H1 (cell line): ENCODE measurements at regions of chr1 and their contacts with region 1.

Region 1: GRCh38 chr1:23657659-23658275 is 33.8 kb upstream of the RPL11 start:
- DNase-seq: peak; percentile 50 to 91
- H3K4me3 ChIP-seq: no peak overlapping the region
- H3K27ac ChIP-seq: no peak overlapping the region
- H3K4me1 ChIP-seq: no peaks in the 10 kb centered on the region
- H3K27me3 ChIP-seq: no peaks in the 10 kb centered on the region
- CTCF ChIP-seq: peak; percentile 81 to 98 (median 90)
- EP300 ChIP-seq: no peak
- POLR2A ChIP-seq: no peak
- RAD21 ChIP-seq: peak; percentile 66 to 76

Region 2: DNA sequence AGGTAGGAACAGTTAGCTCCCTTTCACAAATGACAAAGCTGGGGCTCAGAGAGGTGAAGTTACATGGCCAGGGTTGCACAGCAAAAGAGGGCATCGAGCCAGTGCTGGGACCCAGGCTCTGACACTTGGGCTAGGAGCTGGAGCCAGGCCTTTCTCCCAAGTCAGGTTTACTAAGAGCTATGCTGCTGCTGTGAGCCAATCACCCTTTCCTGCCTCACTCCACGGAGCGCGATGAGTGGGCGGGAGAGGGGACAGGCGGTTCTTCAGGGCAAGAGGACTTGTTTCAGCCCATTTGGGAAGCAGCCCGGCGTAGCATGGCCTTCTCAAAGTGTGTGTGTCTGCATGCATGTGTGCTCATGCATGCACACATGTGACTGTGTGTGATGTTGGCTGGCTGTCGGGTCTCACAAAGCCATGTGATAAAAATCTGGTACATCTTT is 109.0 kb before region 1 on chr1:
- CTCF ChIA-PET with region 1: interaction called, 30 read pairs
- POLR2A ChIA-PET with region 1: no interaction called
- DNase-seq: no peak
- H3K4me3 ChIP-seq: no peak overlapping the region
- H3K27ac ChIP-seq: no peak overlapping the region
- H3K4me1 ChIP-seq: peaks cover 7 to 15% (median 8%) of the 10 kb centered on the region in 4 experiments; a peak in 6 of 7 replicates
- H3K27me3 ChIP-seq: peaks cover 0 to 2% (median 1%) of the 10 kb centered on the region in 4 experiments; a peak in 2 of 7 replicates
- CTCF ChIP-seq: no peak
- EP300 ChIP-seq: no peak
- POLR2A ChIP-seq: no peak
- RAD21 ChIP-seq: no peak

Region 3: GRCh38 chr1:23643736-23644554 is 13.8 kb before region 1 on chr1:
- CTCF ChIA-PET with region 1: interaction called, 222 read pairs
- POLR2A ChIA-PET with region 1: interaction called, 3 read pairs
- DNase-seq: no peak
- H3K4me3 ChIP-seq: no peak overlapping the region
- H3K27ac ChIP-seq: no peak overlapping the region
- H3K4me1 ChIP-seq: peaks cover 0 to 4% (median 2%) of the 10 kb centered on the region in 4 experiments; a peak in 3 of 7 replicates
- H3K27me3 ChIP-seq: peaks cover 0 to 2% (median 0%) of the 10 kb centered on the region in 4 experiments; a peak in 2 of 7 replicates
- CTCF ChIP-seq: no peak
- EP300 ChIP-seq: no peak
- POLR2A ChIP-seq: no peak
- RAD21 ChIP-seq: no peak

Region 4: DNA sequence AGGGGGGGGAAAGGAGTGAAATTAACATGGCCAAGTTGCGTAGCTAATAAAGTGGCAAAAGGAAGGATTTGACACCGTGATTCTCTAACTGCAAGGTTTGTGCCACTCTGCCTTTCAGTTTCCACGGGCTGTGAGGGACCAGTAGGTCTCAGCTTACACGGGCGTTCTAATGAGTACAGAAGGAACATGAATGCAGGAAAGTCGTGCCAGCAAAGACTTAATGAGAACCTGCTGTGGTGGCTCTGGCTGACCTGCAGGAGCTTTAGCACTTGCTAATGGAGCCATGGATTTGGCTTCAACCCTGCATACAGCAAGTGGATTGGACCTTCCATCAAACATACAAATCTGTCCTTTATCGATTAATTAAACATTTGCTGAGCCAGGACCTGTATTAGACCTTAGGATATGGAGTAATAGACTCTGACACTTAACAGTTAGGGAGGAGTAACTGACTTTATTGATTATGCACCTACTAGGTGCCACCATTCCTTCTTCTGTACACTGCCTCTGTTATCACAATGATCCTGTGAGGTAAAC is 105.3 kb after region 1 on chr1:
- CTCF ChIA-PET with region 1: no interaction called
- POLR2A ChIA-PET with region 1: no interaction called
- DNase-seq: no peak
- H3K4me3 ChIP-seq: no peak overlapping the region
- H3K27ac ChIP-seq: no peak overlapping the region
- H3K4me1 ChIP-seq: no peaks in the 10 kb centered on the region
- H3K27me3 ChIP-seq: no peaks in the 10 kb centered on the region
- CTCF ChIP-seq: no peak
- EP300 ChIP-seq: no peak
- POLR2A ChIP-seq: no peak
- RAD21 ChIP-seq: no peak

Region 5: DNA sequence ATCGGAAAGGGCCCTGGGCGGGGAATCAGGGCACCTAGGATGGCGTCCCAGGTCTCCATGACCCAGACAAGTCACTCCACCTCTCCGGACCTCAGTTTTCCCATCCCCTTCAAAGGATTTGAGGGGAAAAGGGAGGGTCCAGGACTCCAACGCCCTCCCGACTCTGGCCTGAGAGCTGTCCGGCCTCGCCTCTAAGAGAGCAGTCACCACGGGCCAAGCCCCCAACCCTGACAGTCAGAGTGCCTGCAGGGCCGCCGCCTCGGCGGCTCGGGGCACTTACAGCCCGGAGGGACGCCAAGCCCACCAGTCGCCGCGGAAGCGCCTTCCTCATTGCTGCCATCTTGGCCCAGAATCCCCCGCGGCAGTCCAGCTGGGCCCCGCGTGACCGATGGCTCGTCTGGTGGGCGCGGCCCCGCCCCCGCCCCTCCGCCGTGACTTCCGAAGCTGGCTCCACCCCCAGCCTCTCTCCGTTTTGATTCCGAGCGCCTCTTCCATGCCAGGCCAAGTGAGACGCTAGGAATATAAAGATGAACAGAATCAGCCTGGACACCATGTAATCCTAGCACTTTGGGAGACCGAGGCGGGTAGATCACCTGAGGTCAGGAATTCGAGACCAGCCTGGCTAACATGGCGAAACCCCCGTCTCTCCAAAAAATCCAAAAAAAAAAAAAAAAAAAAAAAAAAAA is 167.5 kb after region 1 on chr1 and contains the start of gene HMGCL:
- CTCF ChIA-PET with region 1: no interaction called
- POLR2A ChIA-PET with region 1: no interaction called
- DNase-seq: peak in 1 of 2 experiments; percentile 92
- H3K4me3 ChIP-seq: peak within 1 kb of the TSS; percentile 90 to 96 (median 94)
- H3K27ac ChIP-seq: peak within 1 kb of the TSS; percentile 96
- H3K4me1 ChIP-seq: peaks cover 0 to 6% (median 1%) of the 10 kb centered on the region in 4 experiments; a peak in 2 of 7 replicates
- H3K27me3 ChIP-seq: no peaks in the 10 kb centered on the region
- CTCF ChIP-seq: no peak
- EP300 ChIP-seq: no peak
- POLR2A ChIP-seq: peak; percentile 94 to 96
- RAD21 ChIP-seq: no peak
- total RNA-seq, gene HMGCL: 13.7 and 15.6 TPM in 2 replicates